CD4-positive, alpha-beta memory T cell (primary cell): ENCODE measurements at regions of chr16 and their contacts with region 1.

Region 1: DNA sequence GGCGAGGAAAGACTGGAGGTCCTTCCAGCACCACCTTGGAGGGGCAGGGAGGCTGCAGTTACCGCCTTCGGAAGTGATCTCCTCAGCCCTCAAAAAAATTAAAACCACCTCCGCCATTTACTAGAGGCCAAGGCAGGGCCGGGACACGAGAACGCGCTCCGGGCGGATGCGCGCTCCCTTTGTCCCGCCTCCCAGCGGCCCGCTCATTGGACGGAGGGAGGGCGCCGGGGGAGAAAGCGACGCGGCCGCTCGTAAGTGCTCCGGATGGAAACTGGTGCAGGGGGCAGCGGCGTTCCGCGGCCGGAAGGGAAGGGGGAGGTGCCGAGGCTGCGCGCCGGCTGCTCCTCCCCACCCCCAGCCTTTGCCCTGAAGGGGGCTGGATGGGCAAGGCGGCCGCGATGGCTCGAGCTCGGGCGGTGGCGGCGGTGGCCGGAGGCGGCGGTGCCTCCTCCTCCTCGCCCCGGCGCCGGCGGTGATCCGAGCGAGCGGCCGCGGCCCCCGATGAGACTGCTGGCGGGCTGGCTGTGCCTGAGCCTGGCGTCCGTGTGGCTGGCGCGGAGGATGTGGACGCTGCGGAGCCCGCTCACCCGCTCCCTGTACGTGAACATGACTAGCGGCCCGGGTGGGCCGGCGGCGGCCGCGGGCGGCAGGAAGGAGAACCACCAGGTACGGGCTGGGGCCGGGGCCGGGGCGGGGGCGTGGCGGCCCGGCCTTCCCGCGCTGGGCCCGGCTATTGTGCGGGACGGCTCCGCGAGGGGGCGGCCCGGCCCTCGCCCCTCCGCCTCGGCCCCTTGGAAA is at the start of gene METTL9:
- DNase-seq: peak; percentile 94 to 96 (median 94)
- H3K4me3 ChIP-seq: peak within 1 kb of the TSS; percentile 65 to 80
- H3K4me3 Mint-ChIP-seq: peak within 1 kb of the TSS; percentile 90 to 97 (median 92)
- H3K27ac ChIP-seq: peak within 1 kb of the TSS; percentile 87
- H3K27ac Mint-ChIP-seq: peak within 1 kb of the TSS; percentile 82 to 99 (median 95)
- H3K4me1 ChIP-seq: peaks cover 57% of the 10 kb centered on the region
- H3K4me1 Mint-ChIP-seq: peaks cover 27 to 66% (median 49%) of the 10 kb centered on the region in 4 donors
- H3K27me3 ChIP-seq: no peaks in the 10 kb centered on the region
- H3K27me3 Mint-ChIP-seq: no peaks in the 10 kb centered on the region
- total RNA-seq, gene METTL9: 71.1 to 92.8 TPM

Region 2: GRCh38 chr16:21619765-21620425 is 20.5 kb after region 1 on chr16:
- CTCF ChIA-PET with region 1: interaction called, 8 read pairs
- POLR2A ChIA-PET with region 1: interaction called, 14 read pairs
- intact Hi-C with region 1: no loop called
- DNase-seq: no peak
- H3K4me3 ChIP-seq: no peak overlapping the region
- H3K4me3 Mint-ChIP-seq: peak overlapping the region in 2 of 8 donors; percentile 4 to 49
- H3K27ac ChIP-seq: no peak overlapping the region
- H3K27ac Mint-ChIP-seq: peak overlapping the region in 6 of 7 donors; percentile 1 to 84 (median 66)
- H3K4me1 ChIP-seq: peaks cover 33% of the 10 kb centered on the region
- H3K4me1 Mint-ChIP-seq: peaks cover 32 to 81% (median 56%) of the 10 kb centered on the region in 4 donors
- H3K27me3 ChIP-seq: no peaks in the 10 kb centered on the region
- H3K27me3 Mint-ChIP-seq: no peaks in the 10 kb centered on the region